ENCODE measurements at regions of chr2 and their contacts with region 1.

Region 1: GRCh38 chr2:235746257-235747084 is 252.6 kb downstream of the AGAP1 start:
- DNase-seq: peak in 3 of 5 donors; percentile 52 to 67 (median 55)
- ATAC-seq: peak; percentile 74 to 93 (median 88)
- H3K4me3 ChIP-seq: no peak overlapping the region
- H3K27ac ChIP-seq: no peak overlapping the region
- H3K4me1 ChIP-seq: peaks cover 0 to 10% (median 1%) of the 10 kb centered on the region in 12 donors
- H3K27me3 ChIP-seq: no peaks in the 10 kb centered on the region
- CTCF ChIP-seq: peak; percentile 65 to 84 (median 73)
- POLR2A ChIP-seq: no peak

Region 2: GRCh38 chr2:234544659-234545611 is 1201.5 kb before region 1 on chr2:
- intact Hi-C with region 1: loop called in 1 of 10 experiments (anchors 10 kb)
- DNase-seq: peak; percentile 49 to 84 (median 54)
- ATAC-seq: peak; percentile 51 to 72 (median 62)
- H3K4me3 ChIP-seq: no peak overlapping the region
- H3K27ac ChIP-seq: no peak overlapping the region
- H3K4me1 ChIP-seq: peaks cover 0 to 6% (median 0%) of the 10 kb centered on the region in 12 donors
- H3K27me3 ChIP-seq: peaks cover 0 to 16% (median 0%) of the 10 kb centered on the region in 9 donors
- CTCF ChIP-seq: peak; percentile 79 to 96 (median 92)
- POLR2A ChIP-seq: no peak

Region 3: GRCh38 chr2:235416864-235417499 is 329.5 kb before region 1 on chr2:
- intact Hi-C with region 1: loop called in 1 of 10 experiments (anchors 10 kb)
- DNase-seq: no peak
- ATAC-seq: peak in 3 of 4 donors; percentile 18 to 34 (median 33)
- H3K4me3 ChIP-seq: no peak overlapping the region
- H3K27ac ChIP-seq: peak overlapping the region in 1 of 12 donors; percentile 45
- H3K4me1 ChIP-seq: peaks cover 0 to 31% (median 0%) of the 10 kb centered on the region in 12 donors
- H3K27me3 ChIP-seq: no peaks in the 10 kb centered on the region
- CTCF ChIP-seq: no peak
- POLR2A ChIP-seq: no peak

Region 4: GRCh38 chr2:235493775-235494715 is 252.4 kb before region 1 on chr2 and contains the start of gene AGAP1:
- intact Hi-C with region 1: loop called in 1 of 10 experiments (anchors 5 kb)
- DNase-seq: peak; percentile 89 to 94 (median 91)
- ATAC-seq: peak; percentile 84 to 95 (median 92)
- H3K4me3 ChIP-seq: peak within 1 kb of the TSS; percentile 53 to 94 (median 67)
- H3K27ac ChIP-seq: peak within 1 kb of the TSS; percentile 31 to 87 (median 78)
- H3K4me1 ChIP-seq: peaks cover 0 to 40% (median 24%) of the 10 kb centered on the region in 12 donors
- H3K27me3 ChIP-seq: peaks cover 0 to 23% (median 0%) of the 10 kb centered on the region in 9 donors
- CTCF ChIP-seq: no peak
- POLR2A ChIP-seq: peak in 1 of 2 donors; percentile 63
- total RNA-seq, gene AGAP1: 16.3 to 21.6 (median 19.3) TPM

Region 5: DNA sequence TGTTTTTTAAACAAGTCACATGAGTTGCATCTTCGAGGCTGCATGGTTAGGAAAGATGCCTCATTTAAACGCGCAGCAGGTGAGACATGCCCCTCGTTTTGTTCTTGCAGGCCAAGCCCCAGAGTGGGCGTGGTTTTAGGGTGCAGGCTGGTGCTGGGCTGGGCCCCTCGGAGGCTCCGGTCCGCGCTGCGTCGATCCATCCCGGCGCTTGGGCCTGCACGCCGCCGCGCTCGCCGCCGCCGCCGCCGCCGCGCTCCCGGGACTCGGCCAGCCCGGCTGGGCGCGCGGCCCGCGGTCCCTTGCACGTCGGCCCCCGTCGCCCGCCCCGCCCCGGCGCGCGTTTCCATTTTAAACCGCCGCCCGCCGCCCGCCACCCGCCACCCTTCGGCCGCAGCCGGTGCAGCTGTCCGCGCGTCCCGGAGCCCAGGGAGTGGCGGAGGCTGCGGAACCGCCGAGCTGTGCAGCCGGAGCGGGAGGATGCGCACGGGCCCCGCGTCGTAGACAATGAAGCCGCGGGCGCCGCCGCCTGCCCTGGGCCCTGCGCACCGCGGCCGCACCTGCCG is 77.1 kb before region 1 on chr2:
- intact Hi-C with region 1: loop called in 8 of 10 experiments (anchors 5 to 10 kb)
- DNase-seq: peak; percentile 71 to 86 (median 80)
- ATAC-seq: peak in 3 of 4 donors; percentile 64 to 85 (median 82)
- H3K4me3 ChIP-seq: peak overlapping the region in 11 of 12 donors; percentile 20 to 75 (median 58)
- H3K27ac ChIP-seq: peak overlapping the region in 1 of 12 donors; percentile 48
- H3K4me1 ChIP-seq: peaks cover 0 to 43% (median 18%) of the 10 kb centered on the region in 12 donors
- H3K27me3 ChIP-seq: peaks cover 0 to 42% (median 0%) of the 10 kb centered on the region in 9 donors
- CTCF ChIP-seq: peak in 2 of 12 donors; percentile 7 to 27
- POLR2A ChIP-seq: no peak